ENCODE measurements at regions of chr6 and their contacts with region 1.

Region 1: DNA sequence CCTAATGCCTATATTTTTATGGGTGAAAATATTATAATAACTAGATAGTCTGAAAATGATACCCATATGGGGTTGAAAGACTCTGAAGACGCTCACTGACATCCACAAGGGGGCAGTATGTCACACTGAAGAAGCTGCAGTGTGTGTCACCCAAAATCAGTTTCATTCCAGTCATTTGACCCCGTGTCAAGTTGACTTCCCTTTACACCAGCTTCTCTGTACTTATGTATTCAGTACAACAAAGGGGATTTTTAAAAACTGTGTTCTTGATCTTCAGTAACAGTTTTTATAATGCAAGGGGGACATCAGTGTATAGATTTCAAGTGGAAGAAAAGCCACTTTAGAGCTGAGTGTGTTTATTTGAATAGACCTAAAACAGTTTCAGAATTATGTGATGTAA is 19.3 kb downstream of the FAXC start:
- DNase-seq: peak; percentile 72
- H3K4me3 ChIP-seq: no peak overlapping the region
- H3K27ac ChIP-seq: no peak overlapping the region
- H3K4me1 ChIP-seq: no peaks in the 10 kb centered on the region
- CTCF ChIP-seq: peak; percentile 89

Region 2: GRCh38 chr6:99746261-99746895 is 416.2 kb after region 1 on chr6:
- CTCF ChIA-PET with region 1: no interaction called
- POLR2A ChIA-PET with region 1: no interaction called
- intact Hi-C with region 1: loop called (anchors 10 kb)
- DNase-seq: peak; percentile 69
- H3K4me3 ChIP-seq: no peak overlapping the region
- H3K27ac ChIP-seq: no peak overlapping the region
- H3K4me1 ChIP-seq: no peaks in the 10 kb centered on the region
- CTCF ChIP-seq: peak; percentile 91

Measured in OCI-LY7 (cell line).